ENCODE measurements at regions of chr21 and their contacts with region 1.

Region 1: DNA sequence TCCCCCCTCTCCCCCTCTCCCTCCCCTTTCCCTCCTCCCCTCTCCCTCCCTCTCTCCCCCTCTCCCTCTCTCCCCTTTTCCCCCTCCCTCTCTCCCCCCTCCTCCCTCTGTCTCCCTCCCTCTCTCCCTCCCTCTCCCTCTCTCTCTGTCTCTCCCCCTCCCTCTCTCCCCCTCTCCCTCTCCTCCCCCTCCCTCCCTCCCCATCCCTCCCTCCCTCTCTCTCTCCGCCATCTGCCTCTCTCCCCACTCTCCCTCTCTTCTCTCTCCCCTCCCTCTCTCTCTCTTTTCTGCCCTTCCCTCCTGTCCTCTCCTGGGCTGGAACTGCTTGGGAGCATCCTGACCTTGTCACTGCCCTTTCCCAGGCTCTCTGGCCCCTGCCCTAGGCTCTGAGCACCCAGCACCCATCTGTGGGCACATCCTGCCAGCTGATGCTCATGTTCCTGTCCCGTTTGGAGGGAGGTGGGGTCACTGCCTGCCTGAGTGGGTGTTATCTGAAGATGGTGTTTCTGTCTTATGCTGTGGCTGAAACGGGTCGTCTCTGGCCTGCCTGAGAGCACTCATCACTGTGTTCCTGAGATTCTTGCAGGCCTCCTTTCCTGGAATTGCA is 10.8 kb downstream of the FTCD start:
- DNase-seq: no peak
- H3K4me3 ChIP-seq: no peak overlapping the region
- H3K27ac ChIP-seq: peak overlapping the region in 1 of 4 donors; percentile 14
- H3K4me1 ChIP-seq: peaks cover 0 to 13% (median 8%) of the 10 kb centered on the region in 4 donors
- H3K27me3 ChIP-seq: peaks cover 0 to 9% (median 0%) of the 10 kb centered on the region in 4 donors
- CTCF ChIP-seq: no peak
- EP300 ChIP-seq: no peak
- POLR2A ChIP-seq: no peak

Region 2: DNA sequence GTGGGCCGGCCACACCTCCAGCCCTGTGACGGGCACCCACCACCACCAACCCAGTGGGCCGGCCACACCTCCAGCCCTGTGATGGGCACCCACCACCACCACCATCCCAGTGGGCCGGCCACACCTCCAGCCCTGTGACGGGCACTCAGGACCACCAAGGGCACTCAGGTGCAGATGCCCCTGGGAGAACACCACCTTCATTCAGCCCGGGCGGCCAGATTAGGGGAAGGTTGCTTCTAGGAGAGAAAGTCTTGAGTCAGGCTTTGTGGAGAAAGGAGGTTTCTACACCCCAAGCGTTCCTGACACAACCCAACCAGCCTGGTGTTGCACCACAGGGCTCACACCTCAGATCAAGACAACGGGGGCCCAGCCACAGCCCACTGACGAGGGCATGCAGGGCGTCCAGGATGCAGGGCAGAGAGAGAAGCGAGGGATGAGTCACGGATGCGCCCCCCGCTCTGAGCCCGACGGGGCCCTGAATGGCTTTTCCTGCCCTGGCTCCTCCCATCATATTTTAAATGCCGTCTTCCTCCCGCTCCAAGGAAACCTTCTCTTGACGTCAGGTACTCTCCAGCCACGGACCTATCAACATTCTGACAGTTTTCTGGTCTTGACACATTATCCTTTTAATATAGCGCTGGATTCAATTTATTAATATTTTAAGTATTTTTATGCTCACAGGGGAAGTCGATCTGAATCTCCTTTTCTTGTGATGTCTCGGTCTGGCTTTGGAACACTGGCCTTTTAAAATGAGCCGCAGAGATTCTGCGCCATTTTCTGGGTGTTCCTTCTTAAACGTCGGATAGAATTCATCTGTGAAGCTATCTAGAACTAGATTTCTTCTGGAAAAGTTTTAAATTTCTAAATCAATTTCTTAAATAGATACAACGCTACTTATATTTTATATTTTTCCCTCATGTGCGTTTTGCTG is 40.3 kb after region 1 on chr21:
- intact Hi-C with region 1: loop called (anchors 5 kb)
- DNase-seq: peak; percentile 93
- H3K4me3 ChIP-seq: peak overlapping the region; percentile 39 to 71 (median 60)
- H3K27ac ChIP-seq: peak overlapping the region; percentile 46 to 91 (median 76)
- H3K4me1 ChIP-seq: peaks cover 26 to 55% (median 32%) of the 10 kb centered on the region in 4 donors
- H3K27me3 ChIP-seq: peaks cover 0 to 20% (median 0%) of the 10 kb centered on the region in 4 donors
- CTCF ChIP-seq: no peak
- EP300 ChIP-seq: no peak
- POLR2A ChIP-seq: no peak